ENCODE measurements at regions of chr12 and their contacts with region 1.

Region 1: GRCh38 chr12:121668750-121669520 is 519 bp downstream of the MORN3 start:
- DNase-seq: peak in 1 of 2 donors; percentile 30
- ATAC-seq: no peak
- H3K4me3 ChIP-seq: no peak overlapping the region
- H3K27ac ChIP-seq: no peak overlapping the region
- H3K4me1 ChIP-seq: peaks cover 5 to 21% (median 14%) of the 10 kb centered on the region in 9 donors
- H3K27me3 ChIP-seq: no peaks in the 10 kb centered on the region
- CTCF ChIP-seq: peak; percentile 27 to 76 (median 61)

Region 2: GRCh38 chr12:121499929-121500793 is 168.8 kb before region 1 on chr12:
- intact Hi-C with region 1: loop called in 1 of 10 experiments (anchors 5 kb)
- DNase-seq: peak; percentile 79 to 81
- ATAC-seq: peak; percentile 81 to 93 (median 88)
- H3K4me3 ChIP-seq: peak overlapping the region in 9 of 10 donors; percentile 10 to 45 (median 36)
- H3K27ac ChIP-seq: peak overlapping the region in 9 of 10 donors; percentile 50 to 85 (median 78)
- H3K4me1 ChIP-seq: peaks cover 0 to 28% (median 12%) of the 10 kb centered on the region in 9 donors
- H3K27me3 ChIP-seq: no peaks in the 10 kb centered on the region
- CTCF ChIP-seq: peak; percentile 96 to 99 (median 99)

Region 3: DNA sequence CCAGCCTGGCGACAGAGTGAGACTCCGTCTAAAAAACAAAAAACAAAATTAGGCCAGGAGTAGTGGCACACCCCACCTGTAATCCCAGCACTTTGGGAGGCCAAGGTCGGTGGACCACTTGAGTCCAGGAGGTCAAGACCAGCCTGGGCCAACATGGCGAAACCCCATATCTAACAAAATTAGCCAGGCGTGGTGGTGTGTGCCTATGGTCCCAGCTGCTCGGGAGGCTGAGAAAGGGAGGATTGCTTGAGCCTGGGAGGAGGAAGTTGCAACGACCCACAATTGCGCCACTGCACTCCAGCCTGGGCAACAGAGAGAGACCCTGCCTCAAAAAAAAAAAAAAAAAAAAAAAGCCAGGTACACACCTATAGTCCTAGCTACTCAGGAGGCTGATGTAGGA is 125.1 kb before region 1 on chr12:
- intact Hi-C with region 1: loop called in 1 of 10 experiments (anchors 5 kb)
- DNase-seq: no peak
- ATAC-seq: no peak
- H3K4me3 ChIP-seq: no peak overlapping the region
- H3K27ac ChIP-seq: no peak overlapping the region
- H3K4me1 ChIP-seq: peaks cover 0 to 15% (median 2%) of the 10 kb centered on the region in 9 donors
- H3K27me3 ChIP-seq: no peaks in the 10 kb centered on the region
- CTCF ChIP-seq: no peak

Region 4: DNA sequence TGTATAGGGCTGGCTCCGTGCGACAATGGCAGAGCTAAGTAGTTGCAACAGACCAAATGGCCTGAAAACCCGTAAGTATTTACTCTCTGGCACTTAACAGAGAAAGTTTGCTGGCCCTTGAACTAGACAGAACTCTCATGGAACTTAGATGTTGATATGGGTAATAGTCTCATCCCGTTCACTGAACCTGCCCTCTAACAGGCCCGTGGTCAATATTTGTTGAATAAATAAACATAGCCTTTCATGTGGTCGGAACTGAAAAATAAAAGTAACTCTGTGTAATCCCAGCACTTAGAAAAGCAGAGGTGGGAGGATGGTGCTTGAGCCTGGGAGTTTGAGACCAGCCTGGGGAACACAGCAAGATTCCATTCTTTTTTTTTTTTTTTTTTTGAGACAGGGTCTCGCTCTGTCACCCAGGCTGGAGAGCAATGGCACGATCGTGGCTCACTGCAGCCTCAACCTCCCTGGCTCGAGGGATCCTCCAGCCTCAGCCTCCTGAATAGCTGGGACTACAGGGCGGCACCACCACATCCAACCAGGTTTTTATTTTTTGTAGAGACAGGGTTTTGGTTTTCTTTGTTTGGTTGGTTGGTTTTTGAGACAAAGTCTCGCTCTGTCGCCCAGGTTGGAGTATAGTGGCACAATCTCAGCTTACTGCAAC is 117.8 kb before region 1 on chr12:
- intact Hi-C with region 1: loop called in 4 of 10 experiments (anchors 2 to 5 kb)
- DNase-seq: no peak
- ATAC-seq: no peak
- H3K4me3 ChIP-seq: no peak overlapping the region
- H3K27ac ChIP-seq: no peak overlapping the region
- H3K4me1 ChIP-seq: peaks cover 0 to 13% (median 0%) of the 10 kb centered on the region in 9 donors
- H3K27me3 ChIP-seq: no peaks in the 10 kb centered on the region
- CTCF ChIP-seq: no peak

Region 5: DNA sequence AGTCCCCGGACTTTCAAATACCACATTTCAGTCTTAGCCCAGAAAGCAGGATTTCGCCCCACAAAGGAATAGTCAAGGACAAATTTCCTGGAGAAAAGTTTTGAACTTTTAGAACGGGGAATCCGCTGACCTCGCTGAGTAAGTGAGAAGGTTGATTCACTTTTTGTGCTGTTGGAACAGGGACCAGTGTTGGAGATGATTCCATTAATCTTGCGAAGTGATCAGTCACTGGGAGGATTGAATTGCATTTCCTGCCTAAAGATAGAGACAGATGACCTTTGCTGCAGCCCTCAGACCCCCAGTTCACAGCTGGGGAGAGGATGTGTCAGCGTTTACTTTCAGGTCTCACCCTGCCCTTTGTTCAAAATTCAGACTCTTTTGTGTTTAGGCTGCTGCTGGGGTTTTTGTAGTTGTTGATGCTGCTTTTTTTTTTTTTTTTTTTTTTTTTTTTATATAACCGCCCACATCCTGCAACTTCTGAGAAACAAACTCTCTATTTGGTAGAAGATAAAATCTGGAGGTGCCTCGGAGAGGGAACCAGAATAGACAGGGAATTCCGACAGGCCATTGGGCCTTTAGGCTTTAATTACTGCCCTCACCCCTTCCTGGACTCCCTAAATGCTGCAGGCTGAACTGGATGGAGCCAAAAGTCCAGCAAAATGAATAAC is 78.3 kb before region 1 on chr12:
- intact Hi-C with region 1: no loop called
- DNase-seq: peak in 1 of 2 donors; percentile 21
- ATAC-seq: peak in 7 of 8 donors; percentile 43 to 73 (median 59)
- H3K4me3 ChIP-seq: peak overlapping the region in 8 of 10 donors; percentile 36 to 57 (median 51)
- H3K27ac ChIP-seq: peak overlapping the region in 9 of 10 donors; percentile 56 to 94 (median 75)
- H3K4me1 ChIP-seq: peaks cover 0 to 15% (median 7%) of the 10 kb centered on the region in 9 donors
- H3K27me3 ChIP-seq: no peaks in the 10 kb centered on the region
- CTCF ChIP-seq: no peak

Region 6: DNA sequence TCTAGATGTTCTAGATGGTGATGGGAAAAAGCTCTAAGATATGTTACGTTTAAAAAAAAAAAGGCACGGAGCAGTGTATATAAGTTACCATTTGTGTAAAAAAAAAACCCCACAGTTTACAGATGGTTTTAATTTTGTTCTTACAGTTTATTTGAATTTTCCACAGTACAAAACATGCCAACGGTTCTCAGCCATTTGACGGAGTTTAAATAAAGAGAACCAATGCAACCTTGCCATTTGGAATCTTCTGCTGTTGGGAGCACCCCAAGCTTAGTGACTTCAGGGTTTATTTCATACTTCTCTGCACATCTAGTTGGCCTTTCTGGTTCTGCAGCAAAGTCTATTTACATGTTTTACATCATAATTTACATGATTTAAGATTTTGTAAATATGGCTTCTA is 197.4 kb after region 1 on chr12:
- intact Hi-C with region 1: no loop called
- DNase-seq: no peak
- ATAC-seq: no peak
- H3K4me3 ChIP-seq: no peak overlapping the region
- H3K27ac ChIP-seq: no peak overlapping the region
- H3K4me1 ChIP-seq: no peaks in the 10 kb centered on the region
- H3K27me3 ChIP-seq: no peaks in the 10 kb centered on the region
- CTCF ChIP-seq: no peak

Measured in heart right ventricle (tissue), 16 donors.